ENCODE measurements at regions of chr3 and their contacts with region 1.

Region 1: DNA sequence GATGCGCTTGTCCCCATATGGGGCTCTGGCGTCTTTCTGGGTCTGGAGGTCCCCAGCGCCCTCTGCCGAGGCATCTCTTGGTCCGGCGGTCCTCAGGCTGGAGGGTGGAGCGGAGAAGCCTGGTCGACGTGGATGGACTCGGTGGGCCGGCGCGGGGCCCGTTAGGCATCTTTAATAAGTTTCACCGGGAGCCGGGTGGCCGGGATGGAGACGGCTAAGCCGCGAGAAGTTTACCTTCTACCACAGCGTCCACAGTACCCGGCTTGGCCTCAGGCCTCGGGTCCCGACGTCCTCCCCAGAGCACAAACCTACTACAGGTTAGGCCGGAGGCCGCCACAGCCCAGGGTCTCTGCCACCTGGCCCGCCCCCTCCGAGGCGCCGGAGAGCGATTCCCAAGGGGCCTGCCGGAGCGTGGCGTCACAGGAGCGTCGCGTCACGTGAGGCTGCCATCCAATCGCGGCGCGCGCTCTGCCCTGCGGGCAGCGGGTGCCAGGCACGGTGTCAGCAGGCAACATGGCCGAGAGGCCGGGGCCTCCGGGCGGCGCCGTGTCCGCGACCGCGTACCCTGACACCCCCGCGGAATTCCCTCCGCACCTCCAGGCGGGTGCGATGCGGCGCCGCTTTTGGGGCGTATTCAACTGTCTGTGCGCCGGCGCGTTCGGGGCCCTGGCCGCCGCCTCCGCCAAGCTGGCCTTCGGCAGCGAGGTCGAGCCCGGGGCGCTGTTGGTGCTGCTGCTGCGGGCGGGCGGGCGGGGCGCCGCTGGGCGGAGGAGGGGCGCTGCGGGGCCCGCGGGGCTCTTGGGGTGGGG is at the start of gene TMEM42:
- DNase-seq: peak; percentile 72 to 96 (median 87)
- ATAC-seq: peak; percentile 89
- H3K4me3 ChIP-seq: peak within 1 kb of the TSS; percentile 86 to 92
- H3K4me3 Mint-ChIP-seq: peak within 1 kb of the TSS; percentile 87
- H3K27ac ChIP-seq: peak within 1 kb of the TSS; percentile 90 to 91
- H3K27ac Mint-ChIP-seq: peak within 1 kb of the TSS; percentile 92
- H3K4me1 ChIP-seq: peaks cover 31% of the 10 kb centered on the region
- H3K4me1 Mint-ChIP-seq: peaks cover 45% of the 10 kb centered on the region
- H3K27me3 ChIP-seq: no peaks in the 10 kb centered on the region
- H3K27me3 Mint-ChIP-seq: no peaks in the 10 kb centered on the region
- CTCF ChIP-seq: no peak
- total RNA-seq, gene TMEM42: 6.6 to 8.3 TPM

Region 2: DNA sequence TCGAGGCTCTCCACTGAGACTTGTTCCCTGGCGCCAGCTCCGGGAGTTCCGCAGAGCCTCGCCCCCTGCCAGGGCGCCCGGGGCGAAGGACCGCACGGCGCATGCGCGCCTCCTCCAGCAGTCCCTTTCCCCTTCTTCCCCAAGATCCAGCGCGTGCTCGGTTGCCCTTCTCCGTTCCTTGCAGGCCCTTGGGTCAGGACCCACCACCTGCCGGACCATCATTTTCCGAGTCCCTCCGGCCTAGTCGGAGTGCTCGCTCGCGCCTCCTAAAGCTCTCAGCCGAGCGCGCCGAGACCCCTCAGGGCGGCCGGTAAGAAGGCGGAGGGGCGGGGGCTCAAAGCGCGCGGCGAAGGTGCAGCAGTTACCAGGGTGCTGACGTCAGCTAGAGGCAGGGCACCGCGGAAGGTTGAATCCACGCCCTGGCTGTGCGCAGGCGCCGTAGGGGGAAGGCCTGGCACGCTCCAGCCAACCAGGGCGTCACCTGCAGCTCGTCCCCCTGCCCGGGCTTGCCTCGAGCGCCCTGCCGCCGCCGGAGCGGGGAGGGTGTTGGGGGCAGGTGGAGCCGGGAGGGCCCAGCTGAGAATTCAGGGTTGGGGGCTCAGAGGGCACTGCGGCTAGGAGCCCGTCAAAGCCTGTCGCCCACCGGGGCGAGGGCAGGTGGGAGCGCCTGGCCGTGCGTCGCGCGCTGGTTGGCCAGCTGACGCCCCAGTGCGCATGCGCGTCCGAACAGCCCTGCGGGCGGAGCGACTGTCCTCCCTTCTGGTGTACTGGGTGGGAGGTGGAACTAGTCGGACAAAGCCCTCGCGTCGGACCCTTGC is 523.4 kb before region 1 on chr3 and contains the start of gene TCAIM:
- CTCF ChIA-PET with region 1: no interaction called
- POLR2A ChIA-PET with region 1: no interaction called
- intact Hi-C with region 1: loop called (anchors 1 to 5 kb)
- DNase-seq: peak; percentile 97 to 100 (median 99)
- ATAC-seq: peak; percentile 92
- H3K4me3 ChIP-seq: peak within 1 kb of the TSS; percentile 76 to 91
- H3K4me3 Mint-ChIP-seq: peak within 1 kb of the TSS; percentile 93
- H3K27ac ChIP-seq: peak within 1 kb of the TSS; percentile 88 to 93
- H3K27ac Mint-ChIP-seq: peak within 1 kb of the TSS; percentile 97
- H3K4me1 ChIP-seq: peaks cover 15% of the 10 kb centered on the region
- H3K4me1 Mint-ChIP-seq: peaks cover 32% of the 10 kb centered on the region
- H3K27me3 ChIP-seq: no peaks in the 10 kb centered on the region
- H3K27me3 Mint-ChIP-seq: peaks cover 6% of the 10 kb centered on the region
- CTCF ChIP-seq: no peak
- total RNA-seq, gene TCAIM: 3.1 to 3.7 TPM